ENCODE measurements at regions of chr4 and their contacts with region 1.

Region 1: DNA sequence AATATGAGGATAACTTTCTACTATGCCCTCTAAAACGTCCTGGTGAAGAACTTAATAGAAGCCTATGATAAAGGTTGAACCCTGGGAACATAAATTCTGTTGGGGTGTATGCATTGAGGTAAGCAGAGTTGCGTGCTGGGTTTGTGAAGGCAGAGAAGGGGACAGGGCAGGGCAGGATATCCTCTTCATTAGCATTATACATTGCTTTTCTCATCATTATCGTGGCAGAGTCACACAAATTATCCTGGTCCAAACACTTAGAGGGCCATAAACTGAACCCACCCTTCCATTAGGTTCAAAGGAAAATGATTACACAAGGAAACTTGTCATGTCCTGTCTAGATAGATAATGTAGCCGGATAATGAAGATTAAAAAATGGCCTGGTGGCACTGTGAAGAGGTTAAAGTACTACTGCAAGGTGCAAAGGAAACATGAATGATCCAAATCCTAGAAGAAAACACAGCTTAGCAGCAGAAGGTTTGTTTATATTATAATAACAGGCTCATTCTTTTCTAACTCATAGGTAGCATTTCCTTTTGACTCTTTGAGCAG is 189.1 kb downstream of the SPCS3 start:
- DNase-seq: no peak
- H3K4me3 ChIP-seq: no peak overlapping the region
- H3K27ac ChIP-seq: no peak overlapping the region
- H3K4me1 ChIP-seq: no peaks in the 10 kb centered on the region
- H3K27me3 ChIP-seq: no peaks in the 10 kb centered on the region
- CTCF ChIP-seq: no peak

Region 2: DNA sequence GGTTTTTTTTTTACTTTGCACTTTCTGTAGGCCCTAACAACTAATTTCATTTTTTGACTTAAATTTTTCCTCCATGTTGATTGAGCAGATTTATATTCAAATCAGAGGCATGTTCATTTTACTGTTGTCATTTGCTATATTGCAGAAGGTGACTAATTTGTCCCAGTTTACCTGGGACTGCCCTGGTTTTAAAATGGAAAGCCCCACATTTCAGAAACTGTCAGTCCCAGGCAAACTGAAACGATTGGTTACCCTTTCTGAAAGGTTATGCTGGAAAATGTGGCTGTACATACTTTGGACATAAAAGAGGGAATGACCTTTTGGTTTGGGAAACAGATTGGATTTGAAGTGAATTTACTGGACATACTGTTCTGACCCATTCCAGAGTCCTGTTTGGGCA is 29.1 kb before region 1 on chr4:
- CTCF ChIA-PET with region 1: no interaction called
- POLR2A ChIA-PET with region 1: no interaction called
- intact Hi-C with region 1: loop called (anchors 1 kb)
- DNase-seq: no peak
- H3K4me3 ChIP-seq: no peak overlapping the region
- H3K27ac ChIP-seq: no peak overlapping the region
- H3K4me1 ChIP-seq: no peaks in the 10 kb centered on the region
- H3K27me3 ChIP-seq: no peaks in the 10 kb centered on the region
- CTCF ChIP-seq: no peak

Region 3: GRCh38 chr4:176526704-176527103 is 17.8 kb after region 1 on chr4:
- CTCF ChIA-PET with region 1: interaction called, 19 read pairs
- POLR2A ChIA-PET with region 1: no interaction called
- intact Hi-C with region 1: no loop called
- DNase-seq: no peak
- H3K4me3 ChIP-seq: no peak overlapping the region
- H3K27ac ChIP-seq: no peak overlapping the region
- H3K4me1 ChIP-seq: no peaks in the 10 kb centered on the region
- H3K27me3 ChIP-seq: no peaks in the 10 kb centered on the region
- CTCF ChIP-seq: no peak

Measured in PC-9 (cell line).